Breast epithelium (tissue), 4 donors: ENCODE measurements at regions of chr20 and their contacts with region 1.

Region 1: DNA sequence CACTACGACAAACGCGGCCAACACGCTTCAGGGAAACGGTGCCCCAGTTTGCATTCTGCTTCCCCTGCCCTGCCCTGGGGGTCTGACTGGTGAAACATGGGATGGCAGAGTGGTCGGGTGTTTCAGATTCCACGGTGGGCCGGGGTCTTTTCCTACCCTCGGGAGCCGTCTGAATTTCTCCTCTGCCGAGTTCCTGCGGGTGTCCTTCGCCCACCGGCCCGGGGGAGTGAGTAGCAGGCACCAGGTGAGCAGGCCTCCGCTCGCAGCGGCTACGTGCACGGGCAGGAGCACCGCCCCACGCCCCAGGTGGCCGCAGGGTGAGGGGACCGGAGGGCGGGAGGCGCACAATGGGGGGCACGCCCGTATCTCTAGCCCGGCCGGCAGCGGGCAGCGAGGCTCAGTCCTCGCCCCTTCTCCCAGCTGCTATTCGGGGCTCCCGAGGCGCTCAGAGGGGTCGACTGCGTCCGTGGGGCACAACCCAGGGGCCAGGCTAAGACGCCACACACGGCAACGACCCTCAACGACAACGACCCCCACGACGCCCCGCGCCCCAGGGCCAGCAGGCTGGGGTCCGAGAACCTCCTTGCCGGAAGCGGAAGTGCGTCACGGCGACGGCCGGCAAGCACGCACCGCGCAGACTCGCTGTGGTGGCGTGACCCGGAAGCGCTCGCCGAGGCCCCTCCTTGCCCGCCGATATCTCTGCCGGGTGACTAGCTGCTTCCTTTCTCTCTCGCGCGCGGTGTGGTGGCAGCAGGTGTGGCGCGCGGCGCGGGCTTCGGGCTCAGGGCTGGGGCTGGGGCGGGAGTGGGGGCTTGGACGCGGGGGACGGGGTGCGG is at the start of gene RPS21:
- DNase-seq: peak; percentile 92 to 94
- H3K4me3 ChIP-seq: peak within 1 kb of the TSS; percentile 87 to 96 (median 94)
- H3K27ac ChIP-seq: peak within 1 kb of the TSS; percentile 96 to 97
- H3K4me1 ChIP-seq: peaks cover 0 to 13% of the 10 kb centered on the region in 2 donors
- H3K27me3 ChIP-seq: no peaks in the 10 kb centered on the region
- CTCF ChIP-seq: no peak
- POLR2A ChIP-seq: peak; percentile 69
- total RNA-seq, gene RPS21: 1,723 to 3,116 (median 2,974) TPM

Region 2: DNA sequence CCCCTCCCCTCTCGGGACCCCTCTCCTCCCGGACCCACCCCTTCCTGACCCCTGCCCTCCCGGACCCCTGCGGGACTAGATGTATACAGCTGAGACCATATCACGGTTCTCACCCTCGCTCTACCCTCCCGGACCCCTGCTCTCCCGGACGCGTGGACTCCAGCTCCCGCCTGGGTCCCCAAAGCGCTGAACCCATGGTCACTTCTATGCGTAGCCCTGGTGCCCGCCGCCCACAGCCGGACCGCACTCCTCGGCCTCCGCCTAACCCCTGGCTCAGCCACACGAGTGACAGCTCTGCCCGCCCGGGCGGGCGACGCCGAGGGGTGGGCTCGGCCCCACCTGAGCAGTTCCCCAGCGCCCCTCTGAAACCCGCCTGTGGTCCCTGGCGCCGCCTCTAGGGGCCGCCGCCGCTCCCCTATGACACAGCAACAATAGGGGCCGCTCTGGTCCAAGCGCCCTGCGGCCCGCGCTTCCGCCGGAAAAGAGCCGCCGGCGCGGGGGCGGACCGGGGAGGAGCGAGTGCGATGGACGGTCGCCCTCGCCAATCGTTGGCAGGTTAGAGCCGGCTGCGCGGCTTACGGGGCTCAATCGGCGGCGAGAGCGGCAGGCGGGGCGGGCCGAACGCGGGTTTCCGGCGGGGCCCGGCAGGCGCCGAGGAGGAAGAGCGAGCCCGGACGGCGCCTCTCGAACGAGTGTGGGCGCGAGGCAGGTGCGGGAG is 84.1 kb before region 1 on chr20 and contains the start of gene ADRM1:
- intact Hi-C with region 1: loop called (anchors 5 kb)
- DNase-seq: peak; percentile 95
- H3K4me3 ChIP-seq: peak within 1 kb of the TSS; percentile 80 to 98 (median 86)
- H3K27ac ChIP-seq: peak within 1 kb of the TSS; percentile 99
- H3K4me1 ChIP-seq: peaks cover 6 to 14% of the 10 kb centered on the region in 2 donors
- H3K27me3 ChIP-seq: no peaks in the 10 kb centered on the region
- CTCF ChIP-seq: peak; percentile 90 to 99 (median 98)
- POLR2A ChIP-seq: peak; percentile 56
- total RNA-seq, gene ADRM1: 80.2 to 131 (median 105) TPM

Region 3: GRCh38 chr20:63645218-63645617 is 1258.6 kb after region 1 on chr20:
- intact Hi-C with region 1: loop called (anchors 5 kb)
- DNase-seq: no peak
- H3K4me3 ChIP-seq: no peak overlapping the region
- H3K27ac ChIP-seq: no peak overlapping the region
- H3K4me1 ChIP-seq: peaks cover 0 to 3% of the 10 kb centered on the region in 2 donors
- H3K27me3 ChIP-seq: no peaks in the 10 kb centered on the region
- CTCF ChIP-seq: no peak
- POLR2A ChIP-seq: no peak